ENCODE measurements at regions of chr3 and their contacts with region 1.

Region 1: GRCh38 chr3:129934234-129935123 is 40.0 kb upstream of the TRH start:
- DNase-seq: peak; percentile 49
- H3K4me3 Mint-ChIP-seq: peak overlapping the region; percentile 47
- H3K27ac Mint-ChIP-seq: no peak overlapping the region
- H3K4me1 Mint-ChIP-seq: peaks cover 16% of the 10 kb centered on the region
- H3K27me3 Mint-ChIP-seq: no peaks in the 10 kb centered on the region
- CTCF ChIP-seq: peak; percentile 98

Region 2: DNA sequence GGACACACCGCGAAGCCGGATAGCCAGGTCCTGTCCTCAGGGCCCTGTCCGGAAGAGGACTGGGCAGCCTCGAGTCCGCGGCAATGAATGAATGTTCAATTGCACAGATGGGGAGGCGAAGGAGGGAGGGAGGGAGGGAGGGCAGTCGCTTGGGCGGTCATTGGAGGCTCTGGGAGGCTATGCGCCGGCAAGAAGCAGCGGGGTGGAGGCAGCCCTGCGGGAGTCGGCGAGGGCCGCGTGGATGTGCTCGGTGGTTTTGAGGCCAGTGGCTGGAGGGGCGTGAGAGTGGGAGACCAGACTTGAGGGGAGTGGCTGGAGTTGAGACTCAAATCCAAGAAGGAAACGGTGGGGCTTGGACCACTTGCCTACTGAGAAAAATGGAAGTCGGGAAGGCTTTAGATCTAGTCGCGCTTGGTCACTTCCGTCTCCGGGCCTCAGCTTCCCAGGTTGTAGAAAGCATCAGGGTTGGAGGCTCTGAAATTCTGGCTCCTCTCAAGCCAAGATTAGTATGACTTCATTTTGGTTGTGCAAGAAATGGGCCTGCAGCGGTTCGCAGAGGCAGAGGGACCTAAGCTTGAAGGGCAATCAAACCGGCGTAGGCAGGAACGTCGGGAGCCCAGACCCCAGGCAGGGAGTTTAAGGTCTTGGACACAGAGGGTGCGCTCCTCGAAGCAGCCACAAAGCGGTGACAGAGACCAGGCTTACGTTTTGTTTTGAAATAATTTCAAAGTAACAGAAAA is 306.9 kb before region 1 on chr3:
- CTCF ChIA-PET with region 1: interaction called, 3 read pairs
- intact Hi-C with region 1: loop called (anchors 1 kb)
- DNase-seq: peak; percentile 86
- H3K4me3 Mint-ChIP-seq: peak overlapping the region; percentile 71
- H3K27ac Mint-ChIP-seq: peak overlapping the region; percentile 57
- H3K4me1 Mint-ChIP-seq: peaks cover 24% of the 10 kb centered on the region
- H3K27me3 Mint-ChIP-seq: no peaks in the 10 kb centered on the region
- CTCF ChIP-seq: peak; percentile 92

Region 3: DNA sequence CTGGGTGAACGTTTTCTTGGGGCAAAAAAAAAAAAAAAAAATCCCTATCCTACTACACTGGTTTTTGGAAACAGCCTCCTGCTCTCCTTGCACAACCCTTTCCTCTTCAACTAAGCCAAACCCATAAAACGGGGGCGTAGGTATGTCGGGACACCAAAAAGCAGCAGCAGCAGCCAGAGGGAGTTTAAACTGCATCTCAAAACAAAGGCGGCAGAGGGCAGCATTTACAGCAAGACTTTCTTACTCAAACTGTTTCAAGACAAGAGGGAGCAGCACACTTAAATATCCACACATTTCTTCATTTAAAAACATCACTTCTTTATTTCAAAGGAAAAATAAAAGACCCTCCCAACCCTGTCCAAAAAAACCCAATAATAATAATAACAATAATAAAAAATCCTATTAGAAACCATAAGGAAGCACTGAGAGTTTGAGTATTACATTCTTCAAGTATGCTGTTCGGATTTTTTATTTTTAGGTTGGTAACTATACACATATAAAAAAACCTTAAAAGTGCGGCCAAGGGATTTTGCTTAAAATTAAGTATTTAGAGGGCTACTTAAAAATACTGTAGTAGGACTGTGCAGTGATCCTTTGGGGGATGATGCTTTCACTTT is 284.1 kb before region 1 on chr3:
- CTCF ChIA-PET with region 1: no interaction called
- intact Hi-C with region 1: loop called (anchors 1 kb)
- DNase-seq: peak; percentile 84
- H3K4me3 Mint-ChIP-seq: no peak overlapping the region
- H3K27ac Mint-ChIP-seq: peak overlapping the region; percentile 63
- H3K4me1 Mint-ChIP-seq: peaks cover 42% of the 10 kb centered on the region
- H3K27me3 Mint-ChIP-seq: no peaks in the 10 kb centered on the region
- CTCF ChIP-seq: peak; percentile 83

Region 4: GRCh38 chr3:129824926-129825541 is 109.4 kb before region 1 on chr3:
- CTCF ChIA-PET with region 1: interaction called, 7 read pairs
- intact Hi-C with region 1: loop called (anchors 2 kb)
- DNase-seq: peak; percentile 88
- H3K4me3 Mint-ChIP-seq: no peak overlapping the region
- H3K27ac Mint-ChIP-seq: peak overlapping the region; percentile 5
- H3K4me1 Mint-ChIP-seq: peaks cover 39% of the 10 kb centered on the region
- H3K27me3 Mint-ChIP-seq: no peaks in the 10 kb centered on the region
- CTCF ChIP-seq: peak; percentile 90

Region 5: DNA sequence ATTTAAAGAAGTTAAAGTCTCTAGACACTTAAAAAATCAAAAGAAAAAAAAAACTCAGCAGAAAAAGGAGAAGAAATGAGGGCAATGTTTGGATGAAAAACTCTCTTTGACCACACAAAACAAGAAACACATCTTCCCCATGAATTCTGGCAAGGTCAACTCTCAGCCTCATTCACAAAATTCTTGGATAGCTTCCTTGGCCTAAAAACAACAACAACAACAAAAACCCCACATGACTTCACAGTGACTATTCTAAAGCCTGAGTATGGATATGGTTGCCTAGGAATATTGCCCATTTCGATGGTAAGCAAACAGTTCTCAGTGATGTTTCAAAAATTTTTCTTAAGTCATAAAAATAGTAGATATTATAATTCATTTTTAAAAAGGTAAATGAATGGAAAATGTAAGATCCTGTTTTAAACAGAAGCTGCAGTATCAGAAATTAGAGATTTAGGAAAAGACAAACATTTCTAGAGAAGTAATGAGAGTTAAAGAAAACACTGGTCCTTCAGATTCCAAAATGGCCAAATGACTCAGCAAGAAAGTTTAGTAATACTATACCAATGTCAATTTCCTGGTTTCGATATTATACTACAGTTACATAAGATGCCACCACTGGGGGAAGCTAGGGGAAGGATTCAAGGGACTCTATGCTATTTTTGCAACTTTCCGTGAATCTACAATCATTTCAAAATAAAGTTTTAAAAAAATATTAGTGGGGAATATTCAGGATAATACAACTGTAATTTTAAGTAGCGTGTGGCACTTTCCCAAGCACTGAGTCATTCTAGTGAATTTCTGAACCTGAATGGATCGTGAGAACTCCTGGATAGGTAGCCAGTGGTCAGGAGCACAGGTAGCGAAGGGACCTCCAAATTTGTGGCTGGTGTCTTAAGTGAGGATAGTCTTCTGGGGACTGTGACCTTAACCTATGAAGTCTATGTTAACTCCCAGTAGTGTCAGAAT is 78.7 kb before region 1 on chr3:
- CTCF ChIA-PET with region 1: interaction called, 11 read pairs
- intact Hi-C with region 1: no loop called
- DNase-seq: no peak
- H3K4me3 Mint-ChIP-seq: no peak overlapping the region
- H3K27ac Mint-ChIP-seq: peak overlapping the region; percentile 86
- H3K4me1 Mint-ChIP-seq: peaks cover 30% of the 10 kb centered on the region
- H3K27me3 Mint-ChIP-seq: no peaks in the 10 kb centered on the region
- CTCF ChIP-seq: no peak

Region 6: GRCh38 chr3:129893581-129894070 is 40.9 kb before region 1 on chr3 and contains the start of gene TMCC1:
- CTCF ChIA-PET with region 1: no interaction called
- intact Hi-C with region 1: loop called (anchors 5 kb)
- DNase-seq: peak; percentile 99
- H3K4me3 Mint-ChIP-seq: peak within 1 kb of the TSS; percentile 88
- H3K27ac Mint-ChIP-seq: peak within 1 kb of the TSS; percentile 71
- H3K4me1 Mint-ChIP-seq: peaks cover 40% of the 10 kb centered on the region
- H3K27me3 Mint-ChIP-seq: no peaks in the 10 kb centered on the region
- CTCF ChIP-seq: no peak
- total RNA-seq, gene TMCC1: 51.7 and 57.2 TPM in 2 replicates

Region 7: GRCh38 chr3:129961134-129961541 is 26.7 kb after region 1 on chr3:
- CTCF ChIA-PET with region 1: no interaction called
- intact Hi-C with region 1: no loop called
- DNase-seq: no peak
- H3K4me3 Mint-ChIP-seq: no peak overlapping the region
- H3K27ac Mint-ChIP-seq: no peak overlapping the region
- H3K4me1 Mint-ChIP-seq: no peaks in the 10 kb centered on the region
- H3K27me3 Mint-ChIP-seq: peaks cover 56% of the 10 kb centered on the region
- CTCF ChIP-seq: no peak